ENCODE measurements at regions of chr4 and their contacts with region 1.

Region 1: GRCh38 chr4:40316782-40317635 is 18.1 kb upstream of the CHRNA9 start:
- DNase-seq: peak; percentile 26 to 85 (median 51)
- ATAC-seq: peak; percentile 64 to 77 (median 77)
- H3K4me3 ChIP-seq: peak overlapping the region; percentile 38 to 62
- H3K4me3 Mint-ChIP-seq: peak overlapping the region; percentile 75 to 83 (median 76)
- H3K27ac ChIP-seq: peak overlapping the region; percentile 85
- H3K27ac Mint-ChIP-seq: peak overlapping the region; percentile 95 to 98
- H3K4me1 ChIP-seq: peaks cover 20 to 28% of the 10 kb centered on the region in 2 experiments
- H3K4me1 Mint-ChIP-seq: peaks cover 44 to 61% (median 60%) of the 10 kb centered on the region in 3 donors
- H3K27me3 ChIP-seq: no peaks in the 10 kb centered on the region
- H3K27me3 Mint-ChIP-seq: no peaks in the 10 kb centered on the region

Region 2: DNA sequence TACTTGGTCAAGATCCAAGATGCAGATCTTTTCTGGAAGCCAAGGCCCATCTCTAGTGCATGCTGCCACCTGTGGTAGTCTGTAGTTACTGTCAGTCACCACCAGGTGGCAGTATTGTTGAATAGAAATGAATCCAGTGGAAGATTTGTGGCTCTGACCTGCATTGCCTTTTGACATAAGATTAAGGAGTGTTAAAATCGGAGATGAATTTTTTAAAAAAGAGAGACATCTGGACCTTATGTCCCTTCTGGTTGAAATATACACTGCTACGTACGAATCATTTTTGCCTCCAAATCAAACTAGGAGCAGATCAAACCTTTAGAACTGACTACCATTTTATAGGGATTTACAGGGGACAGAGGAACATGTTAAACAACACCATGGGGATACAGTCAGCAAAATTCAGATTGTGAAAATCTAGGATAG is 167.0 kb before region 1 on chr4:
- CTCF ChIA-PET with region 1: interaction called, 4 to 16 read pairs
- POLR2A ChIA-PET with region 1: interaction called in 1 of 2 experiments, 3 read pairs
- DNase-seq: peak; percentile 29 to 89 (median 68)
- ATAC-seq: peak; percentile 80 to 91 (median 85)
- H3K4me3 ChIP-seq: no peak overlapping the region
- H3K4me3 Mint-ChIP-seq: no peak overlapping the region
- H3K27ac ChIP-seq: peak overlapping the region; percentile 4
- H3K27ac Mint-ChIP-seq: peak overlapping the region; percentile 87 to 89
- H3K4me1 ChIP-seq: peaks cover 11 to 34% of the 10 kb centered on the region in 2 experiments
- H3K4me1 Mint-ChIP-seq: peaks cover 36 to 41% (median 39%) of the 10 kb centered on the region in 3 donors
- H3K27me3 ChIP-seq: no peaks in the 10 kb centered on the region
- H3K27me3 Mint-ChIP-seq: no peaks in the 10 kb centered on the region

Region 3: DNA sequence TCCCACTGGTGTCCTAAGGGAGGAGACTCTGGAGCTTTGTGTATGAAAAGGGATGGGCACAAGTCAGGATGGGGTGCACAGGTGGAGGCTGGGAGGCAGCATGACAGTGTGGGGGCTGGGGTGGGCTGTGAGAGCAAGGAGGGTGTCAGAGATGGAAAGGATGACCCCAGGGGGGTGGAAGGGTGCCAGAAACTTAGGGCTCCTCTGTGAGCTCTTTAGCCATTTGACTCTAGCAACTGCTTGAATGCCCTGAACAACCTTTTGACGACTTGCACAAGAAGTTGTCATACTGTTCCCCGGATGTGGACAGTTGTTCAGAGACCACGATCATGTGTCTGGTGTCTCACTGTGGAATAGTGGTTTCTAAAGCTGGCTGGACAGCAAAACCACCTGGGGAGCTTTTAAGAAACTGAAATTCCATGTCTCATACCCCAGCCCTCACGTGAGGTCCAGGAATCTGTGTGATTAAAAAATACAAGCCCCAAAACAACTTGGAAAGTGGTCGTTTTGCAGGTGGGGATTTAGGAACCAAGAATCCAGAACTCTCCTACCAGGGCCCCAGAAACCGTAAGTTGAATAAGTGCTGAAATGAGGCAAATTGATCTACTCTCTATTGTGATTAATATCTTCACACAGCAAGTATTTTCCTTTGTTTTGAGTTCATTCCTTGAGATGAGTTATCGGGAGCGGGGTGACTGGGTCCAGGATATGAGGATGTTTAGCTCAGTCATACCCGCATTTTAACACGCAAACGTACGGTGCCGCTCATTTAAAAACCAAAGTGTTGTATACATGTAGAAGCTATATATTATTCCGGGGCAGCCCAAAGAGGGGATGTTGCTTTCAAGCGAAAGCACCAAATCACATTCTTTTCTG is 116.8 kb before region 1 on chr4:
- CTCF ChIA-PET with region 1: interaction called, 3 to 13 read pairs
- POLR2A ChIA-PET with region 1: interaction called, 12 read pairs
- DNase-seq: peak in 24 of 35 experiments; percentile 39 to 78 (median 49)
- ATAC-seq: peak; percentile 16 to 43 (median 35)
- H3K4me3 ChIP-seq: peak overlapping the region; percentile 87 to 96
- H3K4me3 Mint-ChIP-seq: peak overlapping the region; percentile 96 to 99 (median 98)
- H3K27ac ChIP-seq: peak overlapping the region; percentile 99
- H3K27ac Mint-ChIP-seq: peak overlapping the region; percentile 95 to 96
- H3K4me1 ChIP-seq: peaks cover 33 to 48% of the 10 kb centered on the region in 2 experiments
- H3K4me1 Mint-ChIP-seq: peaks cover 40 to 58% (median 52%) of the 10 kb centered on the region in 3 donors
- H3K27me3 ChIP-seq: no peaks in the 10 kb centered on the region
- H3K27me3 Mint-ChIP-seq: no peaks in the 10 kb centered on the region

Region 4: DNA sequence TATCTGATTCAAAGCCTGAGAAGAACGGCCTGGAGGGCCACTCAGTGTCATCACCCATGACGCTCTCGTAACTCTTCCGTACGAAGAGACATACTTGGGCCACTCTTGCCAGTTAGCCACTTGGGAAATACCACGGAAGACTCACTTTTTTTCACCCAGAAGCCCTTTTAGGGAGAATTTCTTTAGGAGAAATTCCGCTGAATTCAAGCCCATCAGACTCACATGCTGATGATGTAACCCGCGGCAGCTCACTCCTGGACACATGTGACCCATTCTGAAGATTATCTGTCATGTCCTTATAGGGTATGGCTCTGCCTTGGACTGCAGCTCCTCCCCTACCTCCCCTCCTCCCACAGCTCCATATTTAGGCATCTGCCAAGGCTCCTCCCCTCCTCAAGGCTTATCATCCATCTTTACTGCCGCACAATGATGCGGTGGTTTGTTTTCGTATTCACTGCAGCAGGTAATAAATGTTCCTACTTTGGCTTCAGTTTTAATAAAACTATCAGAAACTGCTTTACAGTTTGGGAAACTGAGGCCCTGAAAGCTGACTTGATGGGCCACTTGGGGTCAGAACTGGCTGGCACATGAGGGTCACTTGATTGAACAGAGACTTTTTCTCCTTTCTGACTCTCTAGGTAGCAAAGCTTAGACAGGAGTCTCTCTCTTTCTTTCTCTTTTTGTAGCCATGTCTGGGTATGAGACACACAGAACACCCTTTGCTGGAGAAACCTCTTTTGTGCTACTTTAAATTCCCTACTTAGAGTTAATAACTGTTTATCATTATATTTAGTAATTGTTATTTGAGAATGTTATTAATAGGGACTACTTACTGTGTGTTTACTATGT is 78.1 kb before region 1 on chr4:
- CTCF ChIA-PET with region 1: interaction called in 1 of 2 experiments, 19 read pairs
- POLR2A ChIA-PET with region 1: interaction called, 8 to 18 read pairs
- DNase-seq: peak in 34 of 35 experiments; percentile 56 to 92 (median 79)
- ATAC-seq: peak; percentile 86 to 94 (median 92)
- H3K4me3 ChIP-seq: peak overlapping the region; percentile 28 to 29
- H3K4me3 Mint-ChIP-seq: peak overlapping the region; percentile 67 to 76 (median 73)
- H3K27ac ChIP-seq: peak overlapping the region; percentile 97
- H3K27ac Mint-ChIP-seq: peak overlapping the region; percentile 93 to 95
- H3K4me1 ChIP-seq: peaks cover 67 to 99% of the 10 kb centered on the region in 2 experiments
- H3K4me1 Mint-ChIP-seq: peaks cover 91 to 95% (median 94%) of the 10 kb centered on the region in 3 donors
- H3K27me3 ChIP-seq: no peaks in the 10 kb centered on the region
- H3K27me3 Mint-ChIP-seq: no peaks in the 10 kb centered on the region

Region 5: GRCh38 chr4:40349561-40350198 is 32.7 kb after region 1 on chr4:
- CTCF ChIA-PET with region 1: no interaction called
- POLR2A ChIA-PET with region 1: no interaction called
- DNase-seq: no peak
- ATAC-seq: no peak
- H3K4me3 ChIP-seq: no peak overlapping the region
- H3K4me3 Mint-ChIP-seq: no peak overlapping the region
- H3K27ac ChIP-seq: no peak overlapping the region
- H3K27ac Mint-ChIP-seq: peak overlapping the region in 1 of 2 donors; percentile 22
- H3K4me1 ChIP-seq: peaks cover 0 to 9% of the 10 kb centered on the region in 2 experiments
- H3K4me1 Mint-ChIP-seq: peaks cover 7 to 10% (median 8%) of the 10 kb centered on the region in 3 donors
- H3K27me3 ChIP-seq: no peaks in the 10 kb centered on the region
- H3K27me3 Mint-ChIP-seq: peaks cover 0 to 3% of the 10 kb centered on the region in 2 donors

Region 6: GRCh38 chr4:40482985-40483647 is 166.1 kb after region 1 on chr4:
- CTCF ChIA-PET with region 1: interaction called in 1 of 2 experiments, 10 read pairs
- POLR2A ChIA-PET with region 1: no interaction called
- DNase-seq: no peak
- ATAC-seq: no peak
- H3K4me3 ChIP-seq: no peak overlapping the region
- H3K4me3 Mint-ChIP-seq: no peak overlapping the region
- H3K27ac ChIP-seq: no peak overlapping the region
- H3K27ac Mint-ChIP-seq: no peak overlapping the region
- H3K4me1 ChIP-seq: no peaks in the 10 kb centered on the region
- H3K4me1 Mint-ChIP-seq: no peaks in the 10 kb centered on the region
- H3K27me3 ChIP-seq: peaks cover 0 to 7% of the 10 kb centered on the region in 2 experiments
- H3K27me3 Mint-ChIP-seq: peaks cover 4 to 15% of the 10 kb centered on the region in 2 donors